Activated CD4-positive, alpha-beta T cell treated with anti-CD3 and anti-CD28 coated beads for 36 hours (primary cell): ENCODE measurements at regions of chr19 and their contacts with region 1.

Region 1: GRCh38 chr19:1767464-1767933 is 14.2 kb downstream of the ONECUT3 start:
- DNase-seq: peak; percentile 74
- ATAC-seq: peak; percentile 34
- H3K4me3 Mint-ChIP-seq: no peak overlapping the region
- H3K27ac Mint-ChIP-seq: no peak overlapping the region
- H3K4me1 Mint-ChIP-seq: no peaks in the 10 kb centered on the region
- H3K27me3 Mint-ChIP-seq: peaks cover 63% of the 10 kb centered on the region

Region 2: GRCh38 chr19:1551068-1552040 is 216.1 kb before region 1 on chr19:
- CTCF ChIA-PET with region 1: interaction called, 7 read pairs
- POLR2A ChIA-PET with region 1: no interaction called
- intact Hi-C with region 1: loop called (anchors 1 kb)
- DNase-seq: no peak
- ATAC-seq: no peak
- H3K4me3 Mint-ChIP-seq: no peak overlapping the region
- H3K27ac Mint-ChIP-seq: no peak overlapping the region
- H3K4me1 Mint-ChIP-seq: peaks cover under 1% of the 10 kb centered on the region
- H3K27me3 Mint-ChIP-seq: peaks cover 2% of the 10 kb centered on the region

Region 3: GRCh38 chr19:1577090-1577928 is 190.2 kb before region 1 on chr19:
- CTCF ChIA-PET with region 1: no interaction called
- POLR2A ChIA-PET with region 1: no interaction called
- intact Hi-C with region 1: no loop called
- DNase-seq: no peak
- ATAC-seq: no peak
- H3K4me3 Mint-ChIP-seq: no peak overlapping the region
- H3K27ac Mint-ChIP-seq: no peak overlapping the region
- H3K4me1 Mint-ChIP-seq: no peaks in the 10 kb centered on the region
- H3K27me3 Mint-ChIP-seq: no peaks in the 10 kb centered on the region

Region 4: GRCh38 chr19:1605236-1606137 is 162.0 kb before region 1 on chr19 and contains the start of gene UQCR11:
- CTCF ChIA-PET with region 1: interaction called, 3 read pairs
- POLR2A ChIA-PET with region 1: no interaction called
- intact Hi-C with region 1: loop called in 1 of 2 experiments (anchors 5 kb)
- DNase-seq: peak; percentile 96
- ATAC-seq: peak; percentile 89
- H3K4me3 Mint-ChIP-seq: peak within 1 kb of the TSS; percentile 97
- H3K27ac Mint-ChIP-seq: peak within 1 kb of the TSS; percentile 99
- H3K4me1 Mint-ChIP-seq: peaks cover 52% of the 10 kb centered on the region
- H3K27me3 Mint-ChIP-seq: no peaks in the 10 kb centered on the region
- total RNA-seq, gene UQCR11: 152 to 226 TPM

Region 5: GRCh38 chr19:1624458-1624857 is 143.0 kb before region 1 on chr19:
- CTCF ChIA-PET with region 1: no interaction called
- POLR2A ChIA-PET with region 1: no interaction called
- intact Hi-C with region 1: loop called in 1 of 2 experiments (anchors 1 kb)
- DNase-seq: peak; percentile 78
- ATAC-seq: peak; percentile 74
- H3K4me3 Mint-ChIP-seq: no peak overlapping the region
- H3K27ac Mint-ChIP-seq: peak overlapping the region; percentile 29
- H3K4me1 Mint-ChIP-seq: no peaks in the 10 kb centered on the region
- H3K27me3 Mint-ChIP-seq: no peaks in the 10 kb centered on the region

Region 6: DNA sequence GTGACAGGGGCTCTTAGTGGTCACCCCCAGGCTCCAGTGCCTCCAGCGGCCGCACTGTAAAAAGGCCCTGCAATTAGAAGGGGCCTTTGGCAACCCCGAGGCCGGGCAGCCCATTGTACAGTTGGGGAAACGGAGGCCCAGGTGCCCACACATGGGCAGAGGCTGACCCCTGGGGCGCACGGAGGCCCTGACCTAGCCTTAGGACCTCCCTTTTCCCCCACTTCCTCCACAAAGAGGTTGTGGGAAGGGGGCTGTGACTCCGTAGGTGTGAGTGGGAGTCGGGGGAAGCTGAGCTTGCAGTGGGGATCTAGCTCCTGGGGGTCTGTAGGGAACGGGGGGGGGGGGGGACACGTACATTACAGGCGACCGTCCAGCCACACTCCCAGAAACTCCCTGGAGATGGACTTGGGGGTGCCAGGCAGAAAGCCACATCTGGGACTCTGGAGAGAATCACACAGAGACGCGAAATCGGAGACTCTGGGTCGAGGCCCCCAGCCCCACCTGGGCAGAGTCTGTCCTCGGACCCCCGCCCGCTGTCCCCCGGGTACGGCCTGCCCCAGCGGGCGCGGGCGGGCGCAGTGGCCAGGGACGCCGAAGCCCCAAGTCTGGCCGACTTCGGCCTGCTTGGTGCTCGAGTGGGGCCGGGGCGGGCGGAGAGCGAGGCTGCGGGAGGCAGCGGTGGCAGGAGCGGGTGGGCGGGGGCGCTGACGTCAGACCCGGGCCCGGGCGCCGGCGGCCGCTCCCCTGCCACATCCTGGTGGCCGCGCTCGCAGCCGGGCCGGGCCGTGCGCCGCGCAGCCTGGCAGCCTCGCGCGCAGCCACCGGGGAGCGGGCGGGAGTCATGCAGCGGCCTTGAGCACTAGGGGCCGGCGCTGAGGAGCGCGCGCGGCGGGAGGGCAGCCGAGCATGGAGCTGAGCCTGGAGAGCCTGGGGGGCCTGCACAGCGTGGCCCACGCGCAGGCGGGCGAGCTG is 14.5 kb before region 1 on chr19 and contains the start of gene ONECUT3:
- CTCF ChIA-PET with region 1: interaction called, 3 read pairs
- POLR2A ChIA-PET with region 1: no interaction called
- intact Hi-C with region 1: loop called in 1 of 2 experiments (anchors 2 kb)
- DNase-seq: peak; percentile 49
- ATAC-seq: peak; percentile 33
- H3K4me3 Mint-ChIP-seq: no peak within 1 kb of the TSS
- H3K27ac Mint-ChIP-seq: no peak within 1 kb of the TSS
- H3K4me1 Mint-ChIP-seq: peaks cover 8% of the 10 kb centered on the region
- H3K27me3 Mint-ChIP-seq: peaks cover 45% of the 10 kb centered on the region
- total RNA-seq, gene ONECUT3: not detected

Region 7: GRCh38 chr19:1782486-1782988 is 15.0 kb after region 1 on chr19:
- CTCF ChIA-PET with region 1: interaction called, 22 read pairs
- POLR2A ChIA-PET with region 1: no interaction called
- intact Hi-C with region 1: no loop called
- DNase-seq: no peak
- ATAC-seq: no peak
- H3K4me3 Mint-ChIP-seq: no peak overlapping the region
- H3K27ac Mint-ChIP-seq: no peak overlapping the region
- H3K4me1 Mint-ChIP-seq: peaks cover 2% of the 10 kb centered on the region
- H3K27me3 Mint-ChIP-seq: peaks cover 38% of the 10 kb centered on the region